ENCODE measurements at regions of chr10 and their contacts with region 1.

Region 1: DNA sequence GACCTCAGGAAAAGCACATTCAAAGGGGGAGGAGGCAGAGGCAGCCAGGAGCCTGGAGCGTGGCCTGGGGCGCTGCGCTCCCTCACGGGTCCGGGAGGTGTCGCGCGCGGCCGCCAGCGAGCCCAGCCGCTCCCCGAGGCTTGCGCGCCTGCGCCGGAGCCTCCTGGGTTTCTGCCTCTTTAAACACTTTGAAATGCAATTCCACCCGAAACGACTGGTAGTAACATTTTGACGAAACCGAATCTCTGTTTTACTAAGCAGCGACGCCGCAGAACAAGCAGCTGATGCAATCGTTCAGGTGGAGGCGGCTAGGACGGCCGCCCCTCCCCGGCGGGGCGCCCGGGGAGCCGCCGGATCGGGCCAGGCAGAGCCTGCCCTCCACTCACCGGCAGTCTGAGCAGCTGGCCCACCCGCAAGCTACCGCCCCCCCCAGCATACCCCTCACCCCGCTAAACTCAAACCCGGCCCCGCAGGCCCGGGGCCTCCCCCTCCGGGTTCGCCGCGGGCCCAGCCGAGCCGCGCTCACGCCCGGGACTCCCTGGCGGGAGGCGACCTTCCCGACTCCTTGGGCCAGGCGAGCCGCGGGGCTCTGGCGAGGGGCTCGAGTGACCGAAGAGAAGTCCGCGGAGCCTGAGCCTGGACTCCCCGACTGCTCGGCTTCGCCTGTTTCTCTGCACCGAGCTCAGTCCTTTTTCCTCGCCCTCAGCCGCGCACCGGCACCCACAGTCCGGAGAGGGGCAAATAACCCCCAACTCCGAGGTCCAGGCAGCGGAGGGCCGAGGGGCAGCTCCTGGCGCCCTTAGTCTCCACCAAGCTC is 3.2 kb downstream of the MKX start:
- DNase-seq: peak; percentile 88
- ATAC-seq: peak; percentile 92
- H3K4me3 Mint-ChIP-seq: peak overlapping the region; percentile 58
- H3K27ac Mint-ChIP-seq: no peak overlapping the region
- H3K4me1 Mint-ChIP-seq: peaks cover 36% of the 10 kb centered on the region
- H3K27me3 Mint-ChIP-seq: peaks cover 73% of the 10 kb centered on the region

Region 2: DNA sequence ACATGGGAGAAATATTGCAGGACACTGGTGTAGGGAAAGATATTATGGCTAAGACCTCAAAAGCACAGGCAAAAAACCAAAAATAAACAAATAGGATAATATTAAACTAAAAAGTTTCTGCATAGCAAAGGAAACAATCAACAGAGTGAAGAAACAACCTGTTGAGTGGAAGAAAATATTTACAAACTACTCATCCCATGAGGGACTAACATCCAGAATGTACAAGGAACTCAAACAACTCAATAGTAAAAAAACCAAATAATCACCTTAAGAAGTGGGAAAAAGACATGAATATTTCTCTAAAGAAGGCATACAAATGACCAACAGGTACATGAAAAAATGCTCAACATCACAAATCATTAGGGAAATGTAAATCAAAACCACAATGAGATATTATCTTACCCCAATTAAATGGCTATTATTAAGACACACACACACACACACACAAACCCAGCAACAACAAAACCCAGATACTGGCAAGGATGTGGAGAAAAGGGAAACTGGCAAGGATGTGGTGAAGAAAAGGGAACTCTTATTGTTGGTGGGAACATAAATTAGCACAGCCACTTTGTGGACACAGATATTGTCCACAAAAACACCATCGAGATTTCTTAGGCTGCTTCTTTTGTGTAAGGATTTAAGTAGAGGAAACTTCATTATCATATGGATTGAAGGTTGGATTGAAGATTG is 248.1 kb before region 1 on chr10:
- CTCF ChIA-PET with region 1: no interaction called
- DNase-seq: no peak
- ATAC-seq: no peak
- H3K4me3 Mint-ChIP-seq: no peak overlapping the region
- H3K27ac Mint-ChIP-seq: no peak overlapping the region
- H3K4me1 Mint-ChIP-seq: peaks cover 2% of the 10 kb centered on the region
- H3K27me3 Mint-ChIP-seq: peaks cover 13% of the 10 kb centered on the region

Region 3: GRCh38 chr10:27724287-27724686 is 18.1 kb before region 1 on chr10:
- CTCF ChIA-PET with region 1: no interaction called
- DNase-seq: no peak
- ATAC-seq: no peak
- H3K4me3 Mint-ChIP-seq: no peak overlapping the region
- H3K27ac Mint-ChIP-seq: no peak overlapping the region
- H3K4me1 Mint-ChIP-seq: peaks cover 13% of the 10 kb centered on the region
- H3K27me3 Mint-ChIP-seq: peaks cover 47% of the 10 kb centered on the region

Region 4: GRCh38 chr10:27774831-27775230 is 32.4 kb after region 1 on chr10:
- CTCF ChIA-PET with region 1: no interaction called
- DNase-seq: no peak
- ATAC-seq: no peak
- H3K4me3 Mint-ChIP-seq: no peak overlapping the region
- H3K27ac Mint-ChIP-seq: no peak overlapping the region
- H3K4me1 Mint-ChIP-seq: peaks cover 11% of the 10 kb centered on the region
- H3K27me3 Mint-ChIP-seq: peaks cover 69% of the 10 kb centered on the region

Region 5: GRCh38 chr10:28179006-28179742 is 436.8 kb after region 1 on chr10:
- CTCF ChIA-PET with region 1: interaction called, 22 read pairs
- DNase-seq: peak; percentile 52
- ATAC-seq: peak; percentile 75
- H3K4me3 Mint-ChIP-seq: peak overlapping the region; percentile 75
- H3K27ac Mint-ChIP-seq: peak overlapping the region; percentile 95
- H3K4me1 Mint-ChIP-seq: peaks cover 26% of the 10 kb centered on the region
- H3K27me3 Mint-ChIP-seq: no peaks in the 10 kb centered on the region

Region 6: GRCh38 chr10:28241741-28242399 is 499.5 kb after region 1 on chr10:
- CTCF ChIA-PET with region 1: interaction called, 21 read pairs
- DNase-seq: peak; percentile 50
- ATAC-seq: peak; percentile 63
- H3K4me3 Mint-ChIP-seq: no peak overlapping the region
- H3K27ac Mint-ChIP-seq: no peak overlapping the region
- H3K4me1 Mint-ChIP-seq: peaks cover 3% of the 10 kb centered on the region
- H3K27me3 Mint-ChIP-seq: no peaks in the 10 kb centered on the region

Measured in activated CD8-positive, alpha-beta memory T cell treated with anti-CD3 and anti-CD28 coated beads, Interleukin-2, amount 10 ng/mL, durations not matched to agents 7 days and 5 days (primary cell).